Activated CD8-positive, alpha-beta memory T cell treated with anti-CD3 and anti-CD28 coated beads, Interleukin-2, amount 10 ng/mL, durations not matched to agents 7 days and 5 days (primary cell): ENCODE measurements at regions of chr6 and their contacts with region 1.

Region 1: DNA sequence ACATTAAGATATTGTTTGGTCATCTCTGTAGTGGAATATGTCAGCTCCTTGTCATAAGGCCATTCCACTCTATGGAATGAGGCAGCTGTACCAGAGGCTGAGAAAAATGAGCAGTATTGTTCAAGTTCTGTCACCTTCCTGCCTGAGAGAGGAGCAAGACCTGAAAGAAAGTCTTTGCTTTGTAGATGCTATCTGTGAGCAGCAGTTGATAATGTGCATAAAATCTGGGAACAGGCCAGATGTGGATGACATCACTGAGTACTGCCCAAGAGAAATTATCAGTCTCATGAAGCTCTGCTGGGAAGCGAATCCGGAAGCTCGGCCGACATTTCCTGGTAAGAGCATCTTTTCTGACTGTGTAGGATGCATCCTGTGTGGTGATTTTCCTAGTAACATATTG is 16.8 kb downstream of the RIPK1 start:
- DNase-seq: no peak
- ATAC-seq: no peak
- H3K4me3 Mint-ChIP-seq: no peak overlapping the region
- H3K27ac Mint-ChIP-seq: no peak overlapping the region
- H3K4me1 Mint-ChIP-seq: peaks cover 25% of the 10 kb centered on the region
- H3K27me3 Mint-ChIP-seq: no peaks in the 10 kb centered on the region

Region 2: DNA sequence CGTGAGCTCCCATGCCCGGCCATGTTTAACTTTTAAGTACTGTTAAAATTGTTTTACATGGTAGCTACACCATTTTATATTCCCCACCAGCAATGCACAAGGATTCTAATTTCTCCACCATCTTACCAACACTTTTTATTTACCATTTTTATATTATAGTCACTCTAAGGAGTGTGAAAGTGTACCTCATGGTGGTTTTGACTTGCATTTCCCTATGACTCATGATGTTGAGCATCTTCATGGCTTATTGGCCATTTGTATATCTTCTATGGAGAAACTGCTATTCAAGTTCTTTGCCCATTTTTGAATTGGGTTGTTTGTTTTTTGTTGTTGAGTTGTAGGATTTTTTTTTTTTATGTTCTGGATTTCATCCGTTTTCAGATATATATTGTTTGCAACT is 17.8 kb after region 1 on chr6:
- CTCF ChIA-PET with region 1: interaction called, 11 read pairs
- DNase-seq: no peak
- ATAC-seq: peak; percentile 45
- H3K4me3 Mint-ChIP-seq: no peak overlapping the region
- H3K27ac Mint-ChIP-seq: no peak overlapping the region
- H3K4me1 Mint-ChIP-seq: peaks cover 12% of the 10 kb centered on the region
- H3K27me3 Mint-ChIP-seq: no peaks in the 10 kb centered on the region